CD8-positive, alpha-beta T cell (primary cell): ENCODE measurements at regions of chr17 and their contacts with region 1.

Region 1: DNA sequence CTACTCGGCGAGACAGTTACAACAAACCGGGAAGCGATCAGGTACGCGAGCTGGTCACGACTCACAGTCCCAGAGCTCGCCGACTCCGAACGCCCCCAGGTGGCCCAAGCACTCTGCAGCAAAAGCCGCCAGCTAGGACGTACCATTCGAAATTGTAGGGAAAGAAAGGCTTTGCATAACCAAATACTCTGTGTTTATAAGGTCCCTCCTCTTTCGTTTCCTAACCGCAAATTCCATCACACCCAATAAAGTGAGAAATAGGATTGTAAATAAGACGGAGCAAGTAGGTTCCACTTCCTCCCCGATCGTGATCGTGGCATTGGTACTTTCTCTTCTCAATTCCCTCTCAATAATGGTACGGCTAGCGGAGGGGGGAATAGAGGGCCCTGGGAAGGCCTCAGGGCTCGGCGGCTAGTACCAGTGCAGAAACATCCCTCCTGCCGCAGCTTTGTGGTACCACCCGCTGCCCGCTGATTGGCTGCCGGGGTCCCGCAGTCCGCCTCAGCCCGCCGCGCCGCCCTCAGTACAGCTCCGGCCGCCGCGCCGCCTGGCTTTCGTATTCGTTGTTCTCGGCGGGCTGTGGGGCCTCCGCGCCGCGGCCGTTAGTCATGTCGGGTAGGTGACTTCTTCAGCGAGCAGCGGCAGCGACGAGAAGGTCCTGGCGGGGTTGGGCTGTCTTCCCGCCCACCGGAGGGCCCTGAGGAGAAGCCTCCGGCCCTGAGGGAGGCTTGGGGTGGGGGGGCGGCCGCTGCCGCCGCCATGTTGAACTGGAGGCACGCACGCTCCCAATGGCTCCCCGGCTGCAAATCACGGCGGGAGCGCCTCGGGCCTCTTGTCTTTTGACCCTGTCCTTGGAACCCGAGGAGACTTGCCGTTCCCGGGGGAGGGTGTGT is at the start of gene TAF15:
- DNase-seq: peak; percentile 90 to 98 (median 95)
- ATAC-seq: peak; percentile 90
- H3K4me3 ChIP-seq: peak within 1 kb of the TSS; percentile 64 to 71
- H3K4me3 Mint-ChIP-seq: peak within 1 kb of the TSS; percentile 98
- H3K27ac ChIP-seq: peak within 1 kb of the TSS; percentile 77 to 92
- H3K27ac Mint-ChIP-seq: peak within 1 kb of the TSS; percentile 99
- H3K4me1 ChIP-seq: peaks cover 48% of the 10 kb centered on the region
- H3K4me1 Mint-ChIP-seq: peaks cover 68% of the 10 kb centered on the region
- H3K27me3 ChIP-seq: no peaks in the 10 kb centered on the region
- H3K27me3 Mint-ChIP-seq: no peaks in the 10 kb centered on the region
- CTCF ChIP-seq: peak; percentile 74
- total RNA-seq, gene TAF15: 118 to 121 TPM

Region 2: GRCh38 chr17:34961093-34961911 is 847.9 kb before region 1 on chr17 and contains the starts of genes CCT6B and ZNF830:
- CTCF ChIA-PET with region 1: no interaction called
- POLR2A ChIA-PET with region 1: no interaction called
- intact Hi-C with region 1: loop called in 1 of 2 experiments (anchors 5 kb)
- DNase-seq: peak; percentile 75 to 97 (median 92)
- ATAC-seq: peak; percentile 88
- H3K4me3 ChIP-seq: peak within 1 kb of the TSS; percentile 72 to 78
- H3K4me3 Mint-ChIP-seq: peak within 1 kb of the TSS; percentile 100
- H3K27ac ChIP-seq: peak within 1 kb of the TSS; percentile 84 to 99
- H3K27ac Mint-ChIP-seq: peak within 1 kb of the TSS; percentile 99
- H3K4me1 ChIP-seq: peaks cover 22% of the 10 kb centered on the region
- H3K4me1 Mint-ChIP-seq: peaks cover 40% of the 10 kb centered on the region
- H3K27me3 ChIP-seq: no peaks in the 10 kb centered on the region
- H3K27me3 Mint-ChIP-seq: peaks cover 6% of the 10 kb centered on the region
- CTCF ChIP-seq: no peak
- total RNA-seq, gene CCT6B: 4.0 to 5.9 TPM
- total RNA-seq, gene ZNF830: 43.6 to 45.0 TPM

Region 3: DNA sequence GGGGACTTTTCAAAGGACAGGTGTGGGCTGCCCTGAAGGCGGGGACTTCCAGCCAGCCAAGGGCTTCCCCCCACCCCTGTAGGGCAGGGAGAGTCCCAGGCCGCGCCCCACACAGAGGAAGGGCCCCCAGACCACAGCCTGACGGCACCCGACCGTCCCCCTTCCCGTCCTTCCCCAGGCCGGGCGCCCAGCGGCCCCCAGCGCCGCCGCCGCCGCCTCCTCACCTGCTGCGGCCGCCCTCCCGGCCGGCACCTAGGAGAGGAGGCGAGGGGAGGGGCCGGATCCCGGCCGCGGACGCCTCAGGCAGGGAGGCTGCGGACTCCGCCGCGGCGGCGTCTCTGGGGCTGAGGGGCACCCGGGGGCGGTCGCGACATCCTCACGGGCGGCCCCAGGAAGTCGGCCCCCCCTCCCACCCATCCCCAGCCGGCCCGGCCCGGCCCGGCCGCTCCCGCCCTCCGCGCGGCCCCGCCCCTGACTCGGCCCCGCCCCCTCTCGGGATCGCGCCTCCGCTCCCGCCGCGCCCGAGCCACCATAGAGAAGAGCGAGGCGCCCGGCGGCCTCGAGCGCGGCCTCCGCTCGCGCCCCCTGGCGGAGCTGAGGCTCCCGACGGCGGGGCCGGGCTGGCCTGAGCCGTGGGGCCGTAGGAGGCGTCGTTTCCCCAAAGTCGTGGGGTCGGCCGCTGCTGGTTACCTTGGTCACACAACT is 720.2 kb before region 1 on chr17:
- CTCF ChIA-PET with region 1: no interaction called
- POLR2A ChIA-PET with region 1: no interaction called
- intact Hi-C with region 1: loop called in 1 of 2 experiments (anchors 5 kb)
- DNase-seq: peak; percentile 81 to 96 (median 91)
- ATAC-seq: peak; percentile 78
- H3K4me3 ChIP-seq: peak overlapping the region; percentile 68
- H3K4me3 Mint-ChIP-seq: peak overlapping the region; percentile 97
- H3K27ac ChIP-seq: peak overlapping the region; percentile 65 to 89
- H3K27ac Mint-ChIP-seq: peak overlapping the region; percentile 98
- H3K4me1 ChIP-seq: peaks cover 27% of the 10 kb centered on the region
- H3K4me1 Mint-ChIP-seq: peaks cover 43% of the 10 kb centered on the region
- H3K27me3 ChIP-seq: no peaks in the 10 kb centered on the region
- H3K27me3 Mint-ChIP-seq: no peaks in the 10 kb centered on the region
- CTCF ChIP-seq: peak; percentile 69

Region 4: DNA sequence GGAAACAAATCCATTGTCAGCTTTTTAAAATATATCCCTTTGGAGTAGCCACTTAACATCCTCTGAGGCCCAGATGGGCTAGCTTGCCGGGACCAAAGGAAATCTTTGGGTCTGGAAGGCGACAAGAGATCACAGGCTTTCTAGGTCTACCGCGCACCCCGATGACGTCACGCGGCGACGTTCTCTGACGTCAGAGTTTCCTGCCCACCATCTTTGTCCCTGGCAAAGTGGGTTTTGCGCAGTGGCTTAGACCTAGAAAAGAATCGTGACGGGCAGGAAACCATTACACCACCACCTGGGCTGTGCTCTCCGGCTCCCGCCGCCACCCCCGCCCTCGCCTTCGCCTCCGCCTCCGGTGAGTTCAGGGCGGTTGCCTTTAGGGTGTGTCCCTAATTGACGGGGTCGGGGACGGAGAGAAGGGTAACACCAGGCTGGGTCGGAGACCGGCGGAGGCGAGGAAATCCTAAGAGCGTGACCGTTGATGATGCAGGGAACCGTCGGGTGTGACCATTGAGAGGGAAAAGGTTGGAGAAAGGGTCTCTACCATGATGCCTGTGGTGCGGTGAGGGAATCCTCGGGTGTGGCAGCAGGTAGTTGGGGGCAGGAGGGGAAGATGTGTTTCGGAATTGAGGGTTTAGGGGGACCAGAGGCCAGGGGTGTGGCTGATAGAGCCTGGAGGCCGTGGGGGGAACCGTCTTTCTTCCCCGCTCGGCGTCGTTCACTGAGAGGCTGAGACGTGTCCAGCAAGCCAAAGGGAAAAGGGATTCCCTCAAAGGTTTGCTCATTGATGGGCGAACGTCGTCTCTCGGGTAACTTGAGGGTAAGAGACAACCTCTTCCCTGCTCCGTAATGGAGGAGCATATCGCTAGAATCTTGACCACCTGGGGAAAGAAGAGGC is 221.9 kb before region 1 on chr17 and contains the start of gene AP2B1:
- CTCF ChIA-PET with region 1: interaction called, 4 read pairs
- POLR2A ChIA-PET with region 1: no interaction called
- intact Hi-C with region 1: loop called (anchors 1 to 10 kb)
- DNase-seq: peak; percentile 96 to 100 (median 97)
- ATAC-seq: peak; percentile 98
- H3K4me3 ChIP-seq: peak within 1 kb of the TSS; percentile 84 to 92
- H3K4me3 Mint-ChIP-seq: peak within 1 kb of the TSS; percentile 99
- H3K27ac ChIP-seq: peak within 1 kb of the TSS; percentile 86 to 93
- H3K27ac Mint-ChIP-seq: peak within 1 kb of the TSS; percentile 98
- H3K4me1 ChIP-seq: peaks cover 21% of the 10 kb centered on the region
- H3K4me1 Mint-ChIP-seq: peaks cover 38% of the 10 kb centered on the region
- H3K27me3 ChIP-seq: no peaks in the 10 kb centered on the region
- H3K27me3 Mint-ChIP-seq: no peaks in the 10 kb centered on the region
- CTCF ChIP-seq: no peak
- total RNA-seq, gene AP2B1: 58.7 to 65.7 TPM

Region 5: DNA sequence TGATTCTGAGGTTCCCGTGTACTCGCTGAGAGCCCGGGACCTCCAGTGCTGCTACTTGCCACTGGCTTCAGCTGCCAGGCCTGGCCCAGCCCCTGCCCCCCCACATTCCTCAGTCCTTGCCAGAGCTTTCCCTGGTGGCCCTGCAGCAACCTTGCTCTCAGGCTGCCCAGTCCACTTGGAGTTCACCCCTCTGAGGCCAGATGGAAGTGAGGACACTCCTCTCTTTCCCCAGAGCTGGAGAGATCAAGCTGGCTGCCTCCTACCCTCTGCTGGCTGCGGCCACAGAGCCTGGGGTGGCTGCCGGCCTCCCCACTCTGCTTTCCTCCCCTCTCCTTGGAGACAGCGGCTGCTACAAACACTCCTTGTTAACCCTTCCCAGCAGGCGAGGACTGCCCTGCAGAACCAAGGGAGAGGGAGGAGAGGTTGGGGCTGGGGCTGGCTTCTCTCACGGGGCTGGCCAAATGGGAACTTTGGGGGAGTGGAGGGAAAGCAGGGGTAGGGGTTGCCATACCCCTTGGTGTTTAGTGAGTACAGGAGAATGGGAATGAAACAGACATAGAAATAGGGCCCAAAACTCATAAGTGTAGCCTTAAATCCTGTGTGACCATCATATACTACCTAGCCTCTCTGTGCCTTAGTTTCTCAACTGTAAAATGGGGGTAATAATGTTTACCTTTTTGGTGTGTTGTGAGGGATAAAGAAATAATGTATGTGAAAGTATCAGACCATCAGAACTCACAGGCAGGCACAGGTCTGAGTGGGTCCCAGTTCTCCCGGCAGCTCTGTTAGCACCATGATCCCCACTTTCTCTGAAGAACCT is 56.1 kb before region 1 on chr17 and contains the start of gene GAS2L2:
- CTCF ChIA-PET with region 1: interaction called, 15 read pairs
- POLR2A ChIA-PET with region 1: interaction called, 4 read pairs
- intact Hi-C with region 1: no loop called
- DNase-seq: no peak
- ATAC-seq: no peak
- H3K4me3 ChIP-seq: no peak within 1 kb of the TSS
- H3K4me3 Mint-ChIP-seq: no peak within 1 kb of the TSS
- H3K27ac ChIP-seq: no peak within 1 kb of the TSS
- H3K27ac Mint-ChIP-seq: no peak within 1 kb of the TSS
- H3K4me1 ChIP-seq: peaks cover 7% of the 10 kb centered on the region
- H3K4me1 Mint-ChIP-seq: peaks cover 4% of the 10 kb centered on the region
- H3K27me3 ChIP-seq: peaks cover 9 to 10% of the 10 kb centered on the region in 2 experiments
- H3K27me3 Mint-ChIP-seq: peaks cover 35% of the 10 kb centered on the region
- CTCF ChIP-seq: no peak
- total RNA-seq, gene GAS2L2: 0.17 to 0.27 TPM

Region 6: DNA sequence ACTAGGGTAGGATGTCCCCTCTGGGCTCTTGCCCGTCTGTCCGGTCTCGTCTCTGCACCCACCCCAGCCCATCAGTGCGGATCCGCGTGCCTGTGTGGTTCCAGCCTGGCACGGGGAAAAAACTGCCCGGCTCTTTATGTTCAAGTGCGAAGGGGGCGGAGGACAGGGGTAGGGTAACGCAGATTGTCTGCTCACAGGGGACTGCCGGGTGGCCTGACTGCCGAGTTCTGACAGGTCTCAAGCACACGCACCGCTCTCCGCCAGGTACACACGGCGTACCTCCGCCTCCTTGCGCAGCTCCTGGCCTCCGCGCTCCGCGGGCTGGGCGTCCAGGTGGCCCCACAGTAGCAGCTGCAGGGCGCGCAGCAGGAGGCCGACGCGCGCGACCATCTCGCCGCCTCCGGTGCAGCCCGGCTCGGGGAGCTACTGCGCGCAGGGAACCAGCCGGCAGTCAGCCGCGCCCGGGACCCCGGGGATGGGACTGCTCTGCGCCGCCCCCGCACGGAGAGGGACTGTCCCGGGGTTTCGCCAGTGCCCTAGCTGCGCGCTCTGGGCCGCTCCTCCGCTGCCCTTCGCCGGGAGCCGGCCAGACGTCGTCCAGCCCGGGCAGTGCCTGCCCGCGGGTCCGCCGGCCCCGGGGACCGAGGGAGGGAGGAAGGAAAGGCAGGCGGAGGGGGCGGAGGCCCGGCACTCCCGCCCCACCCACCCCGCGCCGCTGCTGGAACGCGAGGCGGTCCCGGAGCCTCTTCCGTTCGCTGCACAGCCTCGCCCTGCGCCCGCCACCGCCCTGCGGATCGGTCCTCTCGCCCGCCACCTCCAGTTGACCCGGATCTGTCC is 14.0 kb before region 1 on chr17 and contains the start of gene MMP28:
- CTCF ChIA-PET with region 1: interaction called, 14 read pairs
- POLR2A ChIA-PET with region 1: interaction called, 5 read pairs
- intact Hi-C with region 1: no loop called
- DNase-seq: peak in 7 of 9 experiments; percentile 26 to 67 (median 46)
- ATAC-seq: peak; percentile 74
- H3K4me3 ChIP-seq: peak within 1 kb of the TSS; percentile 49 to 55
- H3K4me3 Mint-ChIP-seq: peak within 1 kb of the TSS; percentile 83
- H3K27ac ChIP-seq: no peak within 1 kb of the TSS
- H3K27ac Mint-ChIP-seq: no peak within 1 kb of the TSS
- H3K4me1 ChIP-seq: peaks cover 23% of the 10 kb centered on the region
- H3K4me1 Mint-ChIP-seq: peaks cover 41% of the 10 kb centered on the region
- H3K27me3 ChIP-seq: peaks cover 4 to 15% of the 10 kb centered on the region in 2 experiments
- H3K27me3 Mint-ChIP-seq: peaks cover 25% of the 10 kb centered on the region
- CTCF ChIP-seq: no peak
- total RNA-seq, gene MMP28: 5.4 to 6.5 TPM

Region 7: DNA sequence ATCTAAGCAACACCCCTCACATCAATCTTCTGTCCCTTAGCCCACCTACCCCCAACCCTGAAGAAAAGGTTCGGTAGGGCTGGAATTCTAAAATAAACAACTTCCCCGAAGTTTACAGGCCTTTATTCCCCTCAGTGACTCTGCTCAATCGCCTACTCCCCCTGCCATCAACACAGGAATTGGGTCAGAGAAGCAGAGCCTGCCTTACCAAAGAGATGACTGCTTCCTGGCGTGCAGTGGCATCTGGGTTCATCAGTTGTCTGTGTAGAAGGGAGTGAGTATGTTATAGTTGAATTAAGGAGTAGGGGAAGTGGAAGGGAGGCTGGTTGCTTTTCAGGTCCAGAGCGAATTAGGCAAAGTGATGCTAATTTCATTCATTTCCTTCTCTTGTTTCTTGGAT is 46.8 kb after region 1 on chr17:
- CTCF ChIA-PET with region 1: no interaction called
- POLR2A ChIA-PET with region 1: no interaction called
- intact Hi-C with region 1: no loop called
- DNase-seq: no peak
- ATAC-seq: no peak
- H3K4me3 ChIP-seq: no peak overlapping the region
- H3K4me3 Mint-ChIP-seq: no peak overlapping the region
- H3K27ac ChIP-seq: no peak overlapping the region
- H3K27ac Mint-ChIP-seq: peak overlapping the region; percentile 62
- H3K4me1 ChIP-seq: no peaks in the 10 kb centered on the region
- H3K4me1 Mint-ChIP-seq: peaks cover 15% of the 10 kb centered on the region
- H3K27me3 ChIP-seq: no peaks in the 10 kb centered on the region
- H3K27me3 Mint-ChIP-seq: no peaks in the 10 kb centered on the region
- CTCF ChIP-seq: no peak

Region 8: DNA sequence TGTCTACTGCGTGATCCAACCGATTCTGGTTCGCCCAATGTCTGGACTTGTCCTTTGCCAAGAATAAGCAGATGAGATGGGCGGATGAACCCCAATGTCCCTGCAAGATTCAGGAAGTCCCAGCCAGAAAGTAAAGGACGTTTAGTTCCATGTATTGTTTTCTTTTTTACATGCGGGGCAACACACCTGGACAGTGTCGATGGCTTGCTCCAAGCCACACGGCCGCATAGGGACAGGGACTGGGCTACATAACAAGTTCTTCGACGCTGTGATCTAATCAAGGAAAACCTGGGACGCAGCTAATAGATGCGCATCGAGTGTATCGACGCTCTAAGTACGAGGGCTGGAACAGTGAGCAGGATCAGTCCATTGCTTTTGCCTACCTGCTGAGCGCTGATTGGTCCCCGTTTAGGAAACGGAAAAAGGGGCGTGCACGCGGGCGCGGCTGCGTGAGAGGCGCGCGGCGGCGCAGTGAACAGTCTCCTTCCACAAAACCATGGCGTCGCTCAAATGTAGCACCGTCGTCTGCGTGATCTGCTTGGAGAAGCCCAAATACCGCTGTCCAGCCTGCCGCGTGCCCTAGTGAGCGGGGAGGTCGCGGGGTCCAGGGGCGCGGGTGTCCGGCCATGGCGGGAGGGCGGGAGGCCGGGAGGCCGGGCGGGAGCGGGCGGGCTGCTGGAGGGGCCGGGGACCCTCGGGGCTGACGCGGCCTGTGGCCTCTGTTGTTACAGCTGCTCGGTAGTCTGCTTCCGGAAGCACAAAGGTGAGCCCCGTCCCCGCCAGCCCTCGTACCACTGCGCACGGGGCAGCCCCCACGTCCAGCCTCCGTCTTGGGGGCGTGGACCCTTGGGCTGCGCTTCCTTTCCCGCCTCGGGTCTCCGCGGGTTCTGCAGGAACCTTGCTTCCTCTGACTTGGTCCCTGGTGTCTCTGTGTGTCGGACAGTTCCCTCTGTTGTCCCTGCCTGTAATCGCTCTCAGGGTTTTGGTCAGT is 677.3 kb after region 1 on chr17 and contains the start of gene ZNHIT3:
- CTCF ChIA-PET with region 1: no interaction called
- POLR2A ChIA-PET with region 1: no interaction called
- intact Hi-C with region 1: loop called in 1 of 2 experiments (anchors 1 kb)
- DNase-seq: peak; percentile 80 to 96 (median 90)
- ATAC-seq: peak; percentile 96
- H3K4me3 ChIP-seq: peak within 1 kb of the TSS; percentile 64 to 97
- H3K4me3 Mint-ChIP-seq: peak within 1 kb of the TSS; percentile 100
- H3K27ac ChIP-seq: peak within 1 kb of the TSS; percentile 69 to 70
- H3K27ac Mint-ChIP-seq: peak within 1 kb of the TSS; percentile 99
- H3K4me1 ChIP-seq: peaks cover 45% of the 10 kb centered on the region
- H3K4me1 Mint-ChIP-seq: peaks cover 55% of the 10 kb centered on the region
- H3K27me3 ChIP-seq: peaks cover 0 to 10% of the 10 kb centered on the region in 2 experiments
- H3K27me3 Mint-ChIP-seq: peaks cover 10% of the 10 kb centered on the region
- CTCF ChIP-seq: no peak
- total RNA-seq, gene ZNHIT3: 82.2 to 87.1 TPM